PC-9 (cell line): ENCODE measurements at regions of chr11 and their contacts with region 1.

Region 1: DNA sequence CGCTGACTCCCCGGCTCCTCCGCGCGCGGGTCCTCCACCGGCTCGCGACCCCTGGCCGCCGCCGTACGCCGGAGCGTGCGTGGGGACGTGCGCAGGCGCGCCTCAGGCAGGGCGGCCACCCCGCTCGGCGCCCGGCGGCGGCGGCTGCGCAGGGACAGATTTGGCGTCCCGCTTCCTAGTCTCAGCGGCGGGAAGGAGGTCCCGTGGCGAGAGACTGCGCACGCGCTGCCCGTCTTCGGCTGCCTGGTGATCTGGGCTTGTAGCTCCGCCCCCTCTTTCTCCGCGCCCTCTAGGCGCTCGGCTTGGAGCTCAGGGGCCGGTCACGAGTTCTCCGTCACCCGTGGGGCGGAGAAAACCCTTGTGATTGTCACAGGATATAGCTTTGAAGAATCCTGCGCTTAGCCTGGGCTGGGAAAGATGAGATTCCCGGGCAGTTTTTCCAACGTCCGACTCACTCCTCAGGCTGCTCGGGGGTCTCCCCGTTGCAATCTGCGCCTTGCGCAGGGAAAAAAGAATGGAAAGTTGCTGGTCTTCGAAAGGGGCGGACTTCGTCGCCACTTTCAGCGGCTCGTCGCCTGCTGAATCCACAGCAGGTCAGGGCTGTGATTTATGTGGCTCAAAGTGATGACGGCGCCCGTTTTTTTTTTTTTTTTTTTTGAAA is at the start of gene PATL1:
- DNase-seq: peak; percentile 95 to 99
- H3K4me3 ChIP-seq: peak within 1 kb of the TSS; percentile 81
- H3K27ac ChIP-seq: peak within 1 kb of the TSS; percentile 88
- H3K4me1 ChIP-seq: peaks cover 25% of the 10 kb centered on the region
- H3K27me3 ChIP-seq: no peaks in the 10 kb centered on the region
- CTCF ChIP-seq: no peak
- total RNA-seq, gene PATL1: 33.5 and 55.0 TPM in 2 replicates

Region 2: GRCh38 chr11:57761301-57762234 is 1907.5 kb before region 1 on chr11 and contains the start of gene CTNND1:
- CTCF ChIA-PET with region 1: no interaction called
- POLR2A ChIA-PET with region 1: interaction called, 16 read pairs
- intact Hi-C with region 1: no loop called
- DNase-seq: peak; percentile 92 to 96
- H3K4me3 ChIP-seq: peak within 1 kb of the TSS; percentile 100
- H3K27ac ChIP-seq: peak within 1 kb of the TSS; percentile 98
- H3K4me1 ChIP-seq: peaks cover 30% of the 10 kb centered on the region
- H3K27me3 ChIP-seq: no peaks in the 10 kb centered on the region
- CTCF ChIP-seq: no peak
- total RNA-seq, gene CTNND1: 340 and 413 TPM in 2 replicates

Region 3: GRCh38 chr11:59560702-59561469 is 108.2 kb before region 1 on chr11:
- CTCF ChIA-PET with region 1: no interaction called
- POLR2A ChIA-PET with region 1: interaction called, 6 read pairs
- intact Hi-C with region 1: loop called (anchors 1 kb)
- DNase-seq: peak; percentile 81 to 96
- H3K4me3 ChIP-seq: peak overlapping the region; percentile 79
- H3K27ac ChIP-seq: peak overlapping the region; percentile 84
- H3K4me1 ChIP-seq: peaks cover 22% of the 10 kb centered on the region
- H3K27me3 ChIP-seq: no peaks in the 10 kb centered on the region
- CTCF ChIP-seq: no peak

Region 4: GRCh38 chr11:59706518-59707285 is 37.6 kb after region 1 on chr11:
- CTCF ChIA-PET with region 1: no interaction called
- POLR2A ChIA-PET with region 1: no interaction called
- intact Hi-C with region 1: loop called (anchors 1 kb)
- DNase-seq: peak; percentile 78 to 98
- H3K4me3 ChIP-seq: peak overlapping the region; percentile 17; the same call in 1 of the 2 replicates
- H3K27ac ChIP-seq: peak overlapping the region; percentile 63
- H3K4me1 ChIP-seq: peaks cover 22% of the 10 kb centered on the region
- H3K27me3 ChIP-seq: no peaks in the 10 kb centered on the region
- CTCF ChIP-seq: no peak

Region 5: GRCh38 chr11:59776210-59777066 is 107.4 kb after region 1 on chr11:
- CTCF ChIA-PET with region 1: no interaction called
- POLR2A ChIA-PET with region 1: interaction called, 13 read pairs
- intact Hi-C with region 1: no loop called
- DNase-seq: peak; percentile 57 to 97
- H3K4me3 ChIP-seq: no peak overlapping the region
- H3K27ac ChIP-seq: peak overlapping the region; percentile 28
- H3K4me1 ChIP-seq: peaks cover 48% of the 10 kb centered on the region
- H3K27me3 ChIP-seq: no peaks in the 10 kb centered on the region
- CTCF ChIP-seq: no peak

Region 6: GRCh38 chr11:60797846-60798630 is 1129.0 kb after region 1 on chr11:
- CTCF ChIA-PET with region 1: interaction called, 11 read pairs
- POLR2A ChIA-PET with region 1: no interaction called
- intact Hi-C with region 1: no loop called
- DNase-seq: no peak
- H3K4me3 ChIP-seq: no peak overlapping the region
- H3K27ac ChIP-seq: no peak overlapping the region
- H3K4me1 ChIP-seq: no peaks in the 10 kb centered on the region
- H3K27me3 ChIP-seq: peaks cover 96% of the 10 kb centered on the region
- CTCF ChIP-seq: no peak